ENCODE measurements at regions of chr4 and their contacts with region 1.

Region 1: DNA sequence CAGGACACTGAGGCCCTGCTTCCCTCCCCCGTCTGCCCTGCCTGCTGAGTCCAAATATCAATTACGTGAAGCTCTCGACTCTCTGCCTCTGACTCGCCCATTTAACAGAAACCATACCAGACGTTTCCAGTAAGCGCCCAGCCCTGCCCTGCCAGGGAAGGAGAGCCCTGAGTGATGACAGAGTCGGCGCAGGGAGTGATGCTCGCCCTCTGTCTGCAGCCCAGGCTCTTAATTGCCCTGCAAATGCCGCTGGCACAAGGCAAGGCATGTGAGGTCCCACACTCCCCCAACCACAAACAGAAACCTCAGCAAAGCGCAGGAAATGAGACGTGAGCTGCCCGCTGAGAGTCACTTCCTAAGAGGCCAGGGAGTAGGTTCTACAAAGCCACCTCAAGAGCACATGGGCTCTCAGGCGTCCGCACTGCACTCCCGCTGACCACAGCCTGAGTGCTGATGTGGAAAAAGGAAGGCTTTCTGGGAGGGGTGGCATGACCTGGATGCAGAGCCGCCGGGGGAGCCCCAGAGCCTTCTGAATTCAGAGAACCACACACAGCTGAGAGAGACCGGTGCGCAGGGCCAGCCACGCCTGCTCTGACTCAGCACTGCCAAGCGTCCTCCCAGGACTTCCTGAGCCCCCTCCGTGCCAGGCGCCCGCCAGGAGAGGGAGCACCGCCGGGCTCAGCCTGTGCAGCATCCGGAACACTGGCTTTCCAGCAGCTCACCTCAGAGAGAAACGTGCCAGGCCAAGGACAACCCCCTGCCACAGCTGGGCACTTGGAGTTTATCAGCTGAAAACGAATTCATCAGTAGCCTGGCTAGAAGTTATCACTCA is 5.3 kb downstream of the ZFYVE28 start:
- DNase-seq: peak; percentile 96 to 99 (median 97)
- H3K4me3 ChIP-seq: peak overlapping the region; percentile 15 to 55
- H3K4me3 Mint-ChIP-seq: peak overlapping the region; percentile 79 to 90 (median 82)
- H3K27ac ChIP-seq: peak overlapping the region; percentile 86
- H3K27ac Mint-ChIP-seq: peak overlapping the region; percentile 92 to 99 (median 98)
- H3K4me1 ChIP-seq: peaks cover 81% of the 10 kb centered on the region
- H3K4me1 Mint-ChIP-seq: peaks cover 49 to 81% (median 64%) of the 10 kb centered on the region in 4 donors
- H3K27me3 ChIP-seq: no peaks in the 10 kb centered on the region
- H3K27me3 Mint-ChIP-seq: peaks cover 0 to 2% of the 10 kb centered on the region in 2 donors

Region 2: DNA sequence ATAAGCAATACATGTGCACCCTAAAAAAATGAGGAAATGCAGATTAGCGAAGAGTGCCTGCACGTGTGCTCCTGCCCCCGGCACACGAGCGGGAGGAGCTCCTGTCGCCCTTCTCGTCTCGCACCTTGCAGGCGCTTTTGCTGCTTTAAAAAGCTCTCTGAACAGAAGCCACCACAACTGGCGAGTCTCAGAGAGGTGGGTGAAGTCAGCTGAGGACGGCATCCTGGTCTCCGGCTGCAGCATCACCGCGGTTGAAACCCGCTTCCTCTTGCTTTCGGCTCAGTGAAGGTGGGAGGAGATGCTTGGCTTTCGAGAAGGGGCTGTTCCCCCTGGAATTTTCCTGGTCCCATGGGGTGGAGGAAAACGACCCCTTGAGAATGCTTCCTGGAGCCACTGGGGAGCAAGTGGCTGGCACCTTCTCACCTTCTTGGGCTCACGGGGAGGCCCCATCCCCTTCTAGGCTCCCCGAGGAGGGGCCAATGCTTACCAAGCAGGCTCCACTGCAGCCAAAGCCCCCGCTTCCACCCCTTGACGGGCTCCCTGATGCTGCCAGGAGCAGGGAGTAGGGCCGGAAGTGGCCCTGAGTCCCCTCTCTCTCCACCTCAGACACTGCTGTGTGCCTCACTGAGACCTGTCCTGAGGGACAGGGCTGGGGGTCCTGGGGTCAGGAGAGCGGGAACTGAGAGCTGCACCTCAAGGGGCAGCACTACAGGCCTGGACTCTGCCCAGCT is 122.0 kb before region 1 on chr4:
- CTCF ChIA-PET with region 1: interaction called, 7 read pairs
- POLR2A ChIA-PET with region 1: interaction called, 23 read pairs
- intact Hi-C with region 1: no loop called
- DNase-seq: peak; percentile 81 to 92 (median 84)
- H3K4me3 ChIP-seq: no peak overlapping the region
- H3K4me3 Mint-ChIP-seq: peak overlapping the region in 7 of 8 donors; percentile 77 to 91 (median 81)
- H3K27ac ChIP-seq: peak overlapping the region; percentile 71
- H3K27ac Mint-ChIP-seq: peak overlapping the region; percentile 96 to 99 (median 98)
- H3K4me1 ChIP-seq: peaks cover 41% of the 10 kb centered on the region
- H3K4me1 Mint-ChIP-seq: peaks cover 16 to 52% (median 34%) of the 10 kb centered on the region in 4 donors
- H3K27me3 ChIP-seq: no peaks in the 10 kb centered on the region
- H3K27me3 Mint-ChIP-seq: no peaks in the 10 kb centered on the region

Region 3: GRCh38 chr4:2364654-2365053 is 48.4 kb before region 1 on chr4:
- CTCF ChIA-PET with region 1: interaction called, 6 read pairs
- POLR2A ChIA-PET with region 1: interaction called, 15 read pairs
- intact Hi-C with region 1: loop called (anchors 2 kb)
- DNase-seq: peak; percentile 56 to 75 (median 62)
- H3K4me3 ChIP-seq: peak overlapping the region; percentile 6 to 39
- H3K4me3 Mint-ChIP-seq: peak overlapping the region; percentile 47 to 86 (median 81)
- H3K27ac ChIP-seq: peak overlapping the region; percentile 43
- H3K27ac Mint-ChIP-seq: peak overlapping the region; percentile 13 to 90 (median 53)
- H3K4me1 ChIP-seq: peaks cover 26% of the 10 kb centered on the region
- H3K4me1 Mint-ChIP-seq: peaks cover 7 to 52% (median 20%) of the 10 kb centered on the region in 4 donors
- H3K27me3 ChIP-seq: no peaks in the 10 kb centered on the region
- H3K27me3 Mint-ChIP-seq: no peaks in the 10 kb centered on the region

Region 4: GRCh38 chr4:2393353-2394270 is 19.5 kb before region 1 on chr4:
- CTCF ChIA-PET with region 1: interaction called, 13 read pairs
- POLR2A ChIA-PET with region 1: interaction called, 25 read pairs
- intact Hi-C with region 1: no loop called
- DNase-seq: peak in 1 of 5 donors; percentile 17
- H3K4me3 ChIP-seq: no peak overlapping the region
- H3K4me3 Mint-ChIP-seq: peak overlapping the region in 7 of 8 donors; percentile 4 to 66 (median 55)
- H3K27ac ChIP-seq: no peak overlapping the region
- H3K27ac Mint-ChIP-seq: peak overlapping the region in 4 of 7 donors; percentile 11 to 77 (median 54)
- H3K4me1 ChIP-seq: peaks cover 43% of the 10 kb centered on the region
- H3K4me1 Mint-ChIP-seq: peaks cover 31 to 67% (median 47%) of the 10 kb centered on the region in 4 donors
- H3K27me3 ChIP-seq: no peaks in the 10 kb centered on the region
- H3K27me3 Mint-ChIP-seq: no peaks in the 10 kb centered on the region

Region 5: GRCh38 chr4:2402029-2402428 is 11.1 kb before region 1 on chr4:
- CTCF ChIA-PET with region 1: interaction called, 29 read pairs
- POLR2A ChIA-PET with region 1: interaction called, 53 read pairs
- intact Hi-C with region 1: loop called (anchors 1 kb)
- DNase-seq: no peak
- H3K4me3 ChIP-seq: peak overlapping the region in 1 of 2 donors; percentile 16
- H3K4me3 Mint-ChIP-seq: peak overlapping the region; percentile 69 to 89 (median 77)
- H3K27ac ChIP-seq: no peak overlapping the region
- H3K27ac Mint-ChIP-seq: peak overlapping the region in 6 of 7 donors; percentile 29 to 86 (median 56)
- H3K4me1 ChIP-seq: peaks cover 35% of the 10 kb centered on the region
- H3K4me1 Mint-ChIP-seq: peaks cover 39 to 58% (median 52%) of the 10 kb centered on the region in 4 donors
- H3K27me3 ChIP-seq: no peaks in the 10 kb centered on the region
- H3K27me3 Mint-ChIP-seq: no peaks in the 10 kb centered on the region

Region 6: GRCh38 chr4:2441393-2442174 is 28.5 kb after region 1 on chr4:
- CTCF ChIA-PET with region 1: interaction called, 7 read pairs
- POLR2A ChIA-PET with region 1: interaction called, 5 read pairs
- intact Hi-C with region 1: loop called (anchors 2 kb)
- DNase-seq: peak; percentile 63 to 78 (median 69)
- H3K4me3 ChIP-seq: no peak overlapping the region
- H3K4me3 Mint-ChIP-seq: peak overlapping the region in 1 of 8 donors; percentile 43
- H3K27ac ChIP-seq: no peak overlapping the region
- H3K27ac Mint-ChIP-seq: peak overlapping the region in 1 of 7 donors; percentile 82
- H3K4me1 ChIP-seq: peaks cover 6% of the 10 kb centered on the region
- H3K4me1 Mint-ChIP-seq: peaks cover 0 to 5% (median 2%) of the 10 kb centered on the region in 4 donors
- H3K27me3 ChIP-seq: no peaks in the 10 kb centered on the region
- H3K27me3 Mint-ChIP-seq: no peaks in the 10 kb centered on the region

Measured in CD4-positive, alpha-beta memory T cell (primary cell).